CD8-positive, alpha-beta T cell (primary cell): ENCODE measurements at regions of chr1 and their contacts with region 1.

Region 1: GRCh38 chr1:39653546-39654031 is 14.1 kb upstream of the HEYL start:
- DNase-seq: peak; percentile 55 to 81 (median 73)
- ATAC-seq: peak; percentile 78
- H3K4me3 ChIP-seq: no peak overlapping the region
- H3K4me3 Mint-ChIP-seq: no peak overlapping the region
- H3K27ac ChIP-seq: no peak overlapping the region
- H3K27ac Mint-ChIP-seq: no peak overlapping the region
- H3K4me1 ChIP-seq: no peaks in the 10 kb centered on the region
- H3K4me1 Mint-ChIP-seq: peaks cover 6% of the 10 kb centered on the region
- H3K27me3 ChIP-seq: no peaks in the 10 kb centered on the region
- H3K27me3 Mint-ChIP-seq: peaks cover 6% of the 10 kb centered on the region
- CTCF ChIP-seq: peak; percentile 90

Region 2: GRCh38 chr1:39317910-39318633 is 335.5 kb before region 1 on chr1:
- CTCF ChIA-PET with region 1: no interaction called
- POLR2A ChIA-PET with region 1: no interaction called
- intact Hi-C with region 1: no loop called
- DNase-seq: no peak
- ATAC-seq: no peak
- H3K4me3 ChIP-seq: no peak overlapping the region
- H3K4me3 Mint-ChIP-seq: no peak overlapping the region
- H3K27ac ChIP-seq: no peak overlapping the region
- H3K27ac Mint-ChIP-seq: no peak overlapping the region
- H3K4me1 ChIP-seq: no peaks in the 10 kb centered on the region
- H3K4me1 Mint-ChIP-seq: no peaks in the 10 kb centered on the region
- H3K27me3 ChIP-seq: no peaks in the 10 kb centered on the region
- H3K27me3 Mint-ChIP-seq: no peaks in the 10 kb centered on the region
- CTCF ChIP-seq: no peak

Region 3: DNA sequence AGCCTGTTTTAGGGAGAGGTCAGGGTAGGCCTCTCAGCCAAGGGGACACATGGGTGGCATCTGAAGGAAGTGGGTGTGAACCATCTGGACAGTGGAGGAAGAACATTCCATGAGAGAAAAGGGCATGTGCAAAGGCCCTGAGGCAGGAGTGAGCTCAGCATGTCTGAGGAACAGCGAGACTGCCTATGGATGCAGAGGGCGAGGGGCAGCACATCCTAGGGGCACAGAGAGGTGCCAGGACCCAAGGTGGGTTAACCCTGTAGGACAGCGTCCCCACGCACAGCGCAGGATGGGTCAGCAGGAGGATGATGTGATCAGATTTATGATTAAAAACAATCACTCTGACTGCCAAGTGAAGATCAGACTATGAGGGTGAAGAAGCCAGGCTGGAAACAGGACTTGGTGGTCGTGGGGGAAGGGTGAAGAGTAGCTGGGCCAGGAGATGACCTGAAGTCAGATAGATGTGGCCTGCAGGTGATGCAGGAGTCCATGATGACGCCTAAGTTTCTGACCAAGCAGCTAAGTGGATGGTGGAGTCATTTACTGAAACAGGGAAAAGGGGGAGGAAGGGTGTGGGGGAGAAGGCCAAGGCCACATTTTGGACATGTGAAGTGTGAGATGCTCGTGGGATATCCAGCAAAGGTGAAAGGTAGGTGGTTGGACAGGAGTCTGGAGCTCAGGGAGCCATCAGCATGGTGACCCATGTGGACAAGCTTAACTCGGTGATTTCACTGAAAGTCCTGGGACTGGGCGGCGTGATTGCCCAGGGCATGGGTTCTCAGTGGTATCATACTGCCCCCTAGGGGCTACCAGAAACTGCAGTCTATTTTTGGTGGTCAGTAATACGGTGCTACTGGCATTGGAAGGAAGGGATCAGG is 114.8 kb before region 1 on chr1:
- CTCF ChIA-PET with region 1: no interaction called
- POLR2A ChIA-PET with region 1: no interaction called
- intact Hi-C with region 1: no loop called
- DNase-seq: peak in 8 of 9 experiments; percentile 16 to 71 (median 43)
- ATAC-seq: peak; percentile 67
- H3K4me3 ChIP-seq: no peak overlapping the region
- H3K4me3 Mint-ChIP-seq: no peak overlapping the region
- H3K27ac ChIP-seq: no peak overlapping the region
- H3K27ac Mint-ChIP-seq: no peak overlapping the region
- H3K4me1 ChIP-seq: no peaks in the 10 kb centered on the region
- H3K4me1 Mint-ChIP-seq: no peaks in the 10 kb centered on the region
- H3K27me3 ChIP-seq: no peaks in the 10 kb centered on the region
- H3K27me3 Mint-ChIP-seq: no peaks in the 10 kb centered on the region
- CTCF ChIP-seq: peak; percentile 77

Region 4: DNA sequence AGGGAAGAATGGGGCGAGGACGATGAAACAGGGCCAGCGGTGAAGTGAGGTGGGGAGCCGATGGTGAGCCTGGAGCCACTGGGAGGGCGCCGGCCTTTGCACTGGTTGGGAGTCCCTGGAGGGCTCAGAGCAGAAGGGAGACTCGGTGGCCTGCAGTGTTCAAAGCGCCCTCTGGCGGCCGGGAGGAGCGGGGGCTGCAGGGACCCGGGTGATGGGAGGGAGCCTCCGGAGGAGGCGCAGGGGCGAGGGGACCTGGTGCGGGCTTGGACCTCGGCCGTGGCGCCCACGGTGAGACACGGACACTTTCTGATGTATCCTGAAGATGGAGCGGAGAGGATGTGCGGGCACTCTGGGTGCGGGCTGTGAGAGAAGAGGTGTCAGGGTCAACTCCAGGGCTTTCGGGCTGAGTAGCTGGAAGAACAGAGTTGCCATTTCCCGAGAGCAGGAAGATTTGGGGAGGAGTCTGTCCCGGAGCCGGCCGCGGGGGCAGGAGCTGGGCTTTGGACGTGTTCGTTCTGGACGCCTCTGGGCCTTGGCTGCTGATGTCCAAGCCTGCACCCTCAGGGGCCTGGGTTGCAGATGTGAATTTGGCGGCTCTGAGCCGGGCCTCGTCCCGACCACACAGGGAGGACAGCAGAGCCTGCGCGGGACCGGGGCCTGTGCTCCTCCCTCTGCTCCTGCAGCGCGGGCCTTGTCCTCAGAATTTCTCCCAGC is 43.8 kb before region 1 on chr1:
- CTCF ChIA-PET with region 1: interaction called, 97 read pairs
- POLR2A ChIA-PET with region 1: no interaction called
- intact Hi-C with region 1: loop called (anchors 1 kb)
- DNase-seq: peak; percentile 55 to 86 (median 78)
- ATAC-seq: peak; percentile 72
- H3K4me3 ChIP-seq: no peak overlapping the region
- H3K4me3 Mint-ChIP-seq: no peak overlapping the region
- H3K27ac ChIP-seq: no peak overlapping the region
- H3K27ac Mint-ChIP-seq: no peak overlapping the region
- H3K4me1 ChIP-seq: no peaks in the 10 kb centered on the region
- H3K4me1 Mint-ChIP-seq: peaks cover 8% of the 10 kb centered on the region
- H3K27me3 ChIP-seq: peaks cover 0 to 2% of the 10 kb centered on the region in 2 experiments
- H3K27me3 Mint-ChIP-seq: peaks cover 12% of the 10 kb centered on the region
- CTCF ChIP-seq: peak; percentile 55

Region 5: DNA sequence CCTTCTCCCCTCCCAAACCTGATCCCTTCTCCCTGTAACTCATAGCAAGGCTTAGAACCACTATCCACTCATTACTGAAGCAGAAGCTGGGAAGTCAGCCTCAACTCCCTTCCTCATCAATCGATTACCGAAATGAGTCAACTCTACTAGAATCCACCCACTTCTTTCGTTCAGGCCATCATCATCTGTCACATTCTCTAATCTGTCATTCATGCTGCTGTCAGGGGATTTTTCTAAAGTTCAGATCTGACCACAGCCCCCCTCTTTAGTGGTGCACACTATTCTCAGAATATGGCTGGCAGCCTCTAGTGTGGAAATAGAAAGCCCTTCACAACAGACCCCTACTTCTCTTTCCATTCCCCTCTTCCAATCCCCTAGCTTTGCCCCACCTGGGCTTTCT is 13.2 kb after region 1 on chr1:
- CTCF ChIA-PET with region 1: interaction called, 100 read pairs
- POLR2A ChIA-PET with region 1: no interaction called
- intact Hi-C with region 1: no loop called
- DNase-seq: no peak
- ATAC-seq: no peak
- H3K4me3 ChIP-seq: no peak overlapping the region
- H3K4me3 Mint-ChIP-seq: no peak overlapping the region
- H3K27ac ChIP-seq: no peak overlapping the region
- H3K27ac Mint-ChIP-seq: no peak overlapping the region
- H3K4me1 ChIP-seq: peaks cover 11% of the 10 kb centered on the region
- H3K4me1 Mint-ChIP-seq: peaks cover 6% of the 10 kb centered on the region
- H3K27me3 ChIP-seq: peaks cover 10% of the 10 kb centered on the region in 2 experiments
- H3K27me3 Mint-ChIP-seq: peaks cover 33% of the 10 kb centered on the region
- CTCF ChIP-seq: no peak

Region 6: GRCh38 chr1:39683591-39684312 is 30.2 kb after region 1 on chr1:
- CTCF ChIA-PET with region 1: interaction called, 19 read pairs
- POLR2A ChIA-PET with region 1: no interaction called
- intact Hi-C with region 1: no loop called
- DNase-seq: peak; percentile 22 to 77 (median 56)
- ATAC-seq: peak; percentile 80
- H3K4me3 ChIP-seq: peak overlapping the region; percentile 4 to 29
- H3K4me3 Mint-ChIP-seq: peak overlapping the region; percentile 60
- H3K27ac ChIP-seq: no peak overlapping the region
- H3K27ac Mint-ChIP-seq: peak overlapping the region; percentile 61
- H3K4me1 ChIP-seq: peaks cover 28% of the 10 kb centered on the region
- H3K4me1 Mint-ChIP-seq: peaks cover 34% of the 10 kb centered on the region
- H3K27me3 ChIP-seq: peaks cover 0 to 6% of the 10 kb centered on the region in 2 experiments
- H3K27me3 Mint-ChIP-seq: peaks cover 24% of the 10 kb centered on the region
- CTCF ChIP-seq: no peak

Region 7: GRCh38 chr1:39720094-39720999 is 66.8 kb after region 1 on chr1:
- CTCF ChIA-PET with region 1: interaction called, 31 read pairs
- POLR2A ChIA-PET with region 1: no interaction called
- intact Hi-C with region 1: loop called (anchors 1 kb)
- DNase-seq: peak in 3 of 9 experiments; percentile 12 to 80 (median 72)
- ATAC-seq: peak; percentile 85
- H3K4me3 ChIP-seq: no peak overlapping the region
- H3K4me3 Mint-ChIP-seq: no peak overlapping the region
- H3K27ac ChIP-seq: no peak overlapping the region
- H3K27ac Mint-ChIP-seq: no peak overlapping the region
- H3K4me1 ChIP-seq: no peaks in the 10 kb centered on the region
- H3K4me1 Mint-ChIP-seq: no peaks in the 10 kb centered on the region
- H3K27me3 ChIP-seq: no peaks in the 10 kb centered on the region
- H3K27me3 Mint-ChIP-seq: peaks cover 38% of the 10 kb centered on the region
- CTCF ChIP-seq: peak; percentile 91